ENCODE measurements at regions of chr10 and their contacts with region 1.

Region 1: DNA sequence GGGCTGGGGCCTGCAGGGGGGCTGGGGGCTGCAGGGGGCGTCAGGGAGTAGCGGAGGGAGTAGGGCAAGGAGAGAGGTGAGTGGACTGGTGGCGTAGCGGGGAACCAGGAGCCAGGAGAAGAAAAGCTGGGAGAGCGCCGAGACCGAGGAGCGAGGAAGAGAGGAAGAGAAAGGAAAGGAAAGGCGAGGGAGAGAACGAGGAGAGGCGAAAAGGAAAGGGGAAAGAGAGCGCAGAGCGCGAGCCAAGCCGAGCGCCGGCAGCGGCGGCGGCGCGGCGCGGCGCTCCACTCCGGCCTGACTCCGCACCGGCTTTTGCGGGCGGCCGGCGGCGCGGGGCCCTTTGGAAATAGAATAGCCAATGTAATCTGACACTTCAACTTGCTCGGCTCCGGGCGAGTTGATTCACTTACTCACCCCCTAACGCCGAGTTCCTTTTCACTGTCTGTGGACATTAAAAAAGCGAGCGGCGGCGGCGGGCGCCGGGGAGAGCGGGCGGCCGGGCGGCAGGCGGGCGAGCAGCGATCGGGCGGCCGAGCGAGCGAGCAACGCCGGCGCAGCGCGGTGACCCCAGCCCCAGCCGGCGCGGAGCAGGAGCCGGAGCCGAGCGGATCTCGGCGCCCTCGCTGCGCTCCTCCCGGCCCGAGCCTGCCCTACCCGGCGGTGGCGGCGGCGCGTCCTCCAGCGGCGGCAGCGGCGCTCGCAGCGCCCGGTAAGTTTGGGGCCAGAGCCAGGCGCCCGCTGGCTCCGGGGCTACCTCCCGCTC is at the start of gene ZMIZ1:
- DNase-seq: peak; percentile 63 to 90 (median 76)
- ATAC-seq: peak; percentile 62
- H3K4me3 ChIP-seq: peak within 1 kb of the TSS; percentile 97
- H3K4me3 Mint-ChIP-seq: peak within 1 kb of the TSS; percentile 97
- H3K27ac ChIP-seq: peak within 1 kb of the TSS; percentile 44 to 46
- H3K27ac Mint-ChIP-seq: peak within 1 kb of the TSS; percentile 86
- H3K4me1 ChIP-seq: peaks cover 64% of the 10 kb centered on the region
- H3K4me1 Mint-ChIP-seq: peaks cover 56% of the 10 kb centered on the region
- H3K27me3 ChIP-seq: no peaks in the 10 kb centered on the region
- H3K27me3 Mint-ChIP-seq: no peaks in the 10 kb centered on the region
- CTCF ChIP-seq: no peak
- total RNA-seq, gene ZMIZ1: 14.6 to 15.5 TPM

Region 2: DNA sequence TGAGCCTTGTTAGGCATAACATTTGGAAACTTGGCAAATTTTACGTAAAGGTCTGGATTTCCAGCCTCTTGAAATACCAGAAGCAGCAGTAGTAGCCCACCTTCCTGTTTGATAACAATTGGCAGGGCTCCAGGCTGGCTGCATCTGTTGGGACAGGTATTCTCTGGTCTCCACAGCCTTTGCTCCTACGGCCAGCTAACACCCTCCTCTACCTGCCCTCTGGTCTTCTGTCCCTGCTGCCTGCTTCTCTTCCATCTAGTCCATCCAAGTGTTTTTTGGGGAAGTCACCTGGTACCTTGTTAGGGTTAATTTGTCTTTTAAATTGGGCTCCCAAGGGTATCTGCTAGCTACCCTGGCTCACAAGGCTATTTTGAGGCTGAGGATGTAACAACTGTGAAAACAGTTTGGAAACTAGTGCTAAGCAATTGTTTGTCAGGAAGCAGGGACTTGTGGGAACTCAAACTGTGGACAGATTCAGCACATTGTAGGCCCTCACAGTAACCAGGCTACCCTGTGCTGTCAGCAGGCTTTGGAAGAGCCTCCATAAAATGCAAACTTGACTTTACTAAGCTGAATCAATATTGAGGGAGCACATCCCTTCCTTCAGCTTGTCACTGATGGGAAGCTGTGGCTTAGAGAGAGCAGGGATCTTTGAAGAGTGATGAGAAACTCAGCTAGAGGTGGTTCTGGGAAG is 1026.5 kb before region 1 on chr10:
- CTCF ChIA-PET with region 1: interaction called, 3 read pairs
- POLR2A ChIA-PET with region 1: no interaction called
- intact Hi-C with region 1: loop called in 1 of 2 experiments (anchors 5 kb)
- DNase-seq: no peak
- ATAC-seq: no peak
- H3K4me3 ChIP-seq: no peak overlapping the region
- H3K4me3 Mint-ChIP-seq: no peak overlapping the region
- H3K27ac ChIP-seq: no peak overlapping the region
- H3K27ac Mint-ChIP-seq: peak overlapping the region; percentile 76
- H3K4me1 ChIP-seq: peaks cover 34% of the 10 kb centered on the region
- H3K4me1 Mint-ChIP-seq: peaks cover 52% of the 10 kb centered on the region
- H3K27me3 ChIP-seq: no peaks in the 10 kb centered on the region
- H3K27me3 Mint-ChIP-seq: no peaks in the 10 kb centered on the region
- CTCF ChIP-seq: no peak

Region 3: DNA sequence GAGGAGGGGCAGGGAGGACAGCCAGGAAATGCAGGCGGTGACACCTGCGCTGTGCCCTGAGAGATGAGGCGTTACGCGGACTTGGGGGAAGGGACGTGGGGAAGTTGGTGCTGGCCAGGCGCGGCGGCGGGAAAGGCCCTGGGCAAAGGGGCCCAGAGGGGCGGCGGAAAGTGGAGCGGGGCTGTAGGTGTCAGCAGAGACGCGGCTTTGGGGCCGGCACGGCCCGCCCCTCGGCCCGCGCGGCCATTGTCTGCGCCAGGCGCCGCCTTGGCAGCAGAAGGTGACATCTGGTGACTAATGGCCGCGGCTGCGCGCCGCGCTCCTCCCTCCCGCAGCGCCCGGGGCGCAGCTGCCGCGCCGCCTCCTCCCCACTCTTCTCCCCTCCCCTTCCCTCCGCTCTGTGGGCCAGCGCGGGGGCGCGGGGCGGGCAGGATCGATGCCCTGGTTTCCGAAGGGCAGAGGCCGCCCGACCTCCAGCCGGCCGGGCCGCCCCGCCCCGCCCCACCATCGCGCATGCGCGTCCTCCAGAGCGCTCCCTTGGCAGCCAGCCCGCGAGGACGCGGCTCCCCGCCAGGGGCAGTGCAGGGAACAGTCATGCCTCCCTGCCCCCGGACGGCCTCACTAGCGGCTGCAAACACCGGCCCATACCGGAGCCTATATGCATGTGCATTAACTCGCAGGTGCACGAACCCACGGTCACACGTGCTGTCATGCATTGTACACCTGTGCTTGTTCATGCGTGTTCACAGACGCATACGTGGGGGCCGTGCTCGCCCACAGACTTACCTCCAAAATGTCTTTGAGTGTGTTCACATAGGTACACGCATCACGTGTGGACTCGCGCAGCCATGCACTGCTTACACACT is 765.5 kb before region 1 on chr10:
- CTCF ChIA-PET with region 1: no interaction called
- POLR2A ChIA-PET with region 1: no interaction called
- intact Hi-C with region 1: loop called in 1 of 2 experiments (anchors 2 kb)
- DNase-seq: peak; percentile 89 to 98 (median 96)
- ATAC-seq: peak; percentile 86
- H3K4me3 ChIP-seq: peak overlapping the region; percentile 84
- H3K4me3 Mint-ChIP-seq: peak overlapping the region; percentile 93
- H3K27ac ChIP-seq: peak overlapping the region; percentile 83 to 91
- H3K27ac Mint-ChIP-seq: peak overlapping the region; percentile 90
- H3K4me1 ChIP-seq: peaks cover 26% of the 10 kb centered on the region
- H3K4me1 Mint-ChIP-seq: peaks cover 18% of the 10 kb centered on the region
- H3K27me3 ChIP-seq: no peaks in the 10 kb centered on the region
- H3K27me3 Mint-ChIP-seq: no peaks in the 10 kb centered on the region
- CTCF ChIP-seq: peak; percentile 82

Region 4: GRCh38 chr10:78972947-78973900 is 95.5 kb before region 1 on chr10:
- CTCF ChIA-PET with region 1: no interaction called
- POLR2A ChIA-PET with region 1: interaction called, 8 read pairs
- intact Hi-C with region 1: loop called (anchors 1 to 5 kb)
- DNase-seq: peak; percentile 14 to 86 (median 52)
- ATAC-seq: peak; percentile 69
- H3K4me3 ChIP-seq: peak overlapping the region; percentile 56
- H3K4me3 Mint-ChIP-seq: peak overlapping the region; percentile 91
- H3K27ac ChIP-seq: no peak overlapping the region
- H3K27ac Mint-ChIP-seq: peak overlapping the region; percentile 69
- H3K4me1 ChIP-seq: peaks cover 19% of the 10 kb centered on the region
- H3K4me1 Mint-ChIP-seq: peaks cover 15% of the 10 kb centered on the region
- H3K27me3 ChIP-seq: no peaks in the 10 kb centered on the region
- H3K27me3 Mint-ChIP-seq: no peaks in the 10 kb centered on the region
- CTCF ChIP-seq: no peak

Region 5: DNA sequence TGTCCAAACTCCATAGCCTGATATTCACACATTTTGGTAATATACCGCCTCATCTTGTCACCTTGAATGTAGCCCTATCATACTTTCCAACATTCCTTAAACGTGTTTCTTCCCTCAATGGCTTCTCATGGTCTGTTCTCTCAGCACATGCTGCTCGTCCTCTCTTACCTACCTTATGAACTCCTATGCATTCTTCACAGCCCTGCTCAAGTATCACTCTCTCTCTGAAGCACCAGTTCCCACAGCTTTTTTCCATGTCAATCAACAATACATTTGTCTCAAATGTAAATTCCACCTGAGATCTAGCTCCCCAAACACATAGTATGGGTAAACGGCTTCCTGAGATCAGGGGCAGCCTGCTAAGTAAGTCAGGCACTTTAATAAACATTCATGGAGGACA is 85.1 kb before region 1 on chr10:
- CTCF ChIA-PET with region 1: no interaction called
- POLR2A ChIA-PET with region 1: no interaction called
- intact Hi-C with region 1: no loop called
- DNase-seq: no peak
- ATAC-seq: no peak
- H3K4me3 ChIP-seq: no peak overlapping the region
- H3K4me3 Mint-ChIP-seq: no peak overlapping the region
- H3K27ac ChIP-seq: no peak overlapping the region
- H3K27ac Mint-ChIP-seq: no peak overlapping the region
- H3K4me1 ChIP-seq: peaks cover 8% of the 10 kb centered on the region
- H3K4me1 Mint-ChIP-seq: peaks cover 13% of the 10 kb centered on the region
- H3K27me3 ChIP-seq: no peaks in the 10 kb centered on the region
- H3K27me3 Mint-ChIP-seq: no peaks in the 10 kb centered on the region
- CTCF ChIP-seq: no peak

Region 6: GRCh38 chr10:79149662-79150443 is 81.1 kb after region 1 on chr10:
- CTCF ChIA-PET with region 1: no interaction called
- POLR2A ChIA-PET with region 1: interaction called, 3 read pairs
- intact Hi-C with region 1: loop called in 1 of 2 experiments (anchors 5 kb)
- DNase-seq: peak in 11 of 14 experiments; percentile 11 to 64 (median 46)
- ATAC-seq: peak; percentile 69
- H3K4me3 ChIP-seq: no peak overlapping the region
- H3K4me3 Mint-ChIP-seq: no peak overlapping the region
- H3K27ac ChIP-seq: peak overlapping the region; percentile 5 to 22
- H3K27ac Mint-ChIP-seq: peak overlapping the region; percentile 75
- H3K4me1 ChIP-seq: peaks cover 70% of the 10 kb centered on the region
- H3K4me1 Mint-ChIP-seq: peaks cover 57% of the 10 kb centered on the region
- H3K27me3 ChIP-seq: no peaks in the 10 kb centered on the region
- H3K27me3 Mint-ChIP-seq: no peaks in the 10 kb centered on the region
- CTCF ChIP-seq: no peak

Region 7: GRCh38 chr10:79445141-79445976 is 376.6 kb after region 1 on chr10 and contains the start of gene ZCCHC24:
- CTCF ChIA-PET with region 1: no interaction called
- POLR2A ChIA-PET with region 1: no interaction called
- intact Hi-C with region 1: loop called in 1 of 2 experiments (anchors 10 kb)
- DNase-seq: peak; percentile 87 to 98 (median 93)
- ATAC-seq: peak; percentile 91
- H3K4me3 ChIP-seq: peak within 1 kb of the TSS; percentile 58
- H3K4me3 Mint-ChIP-seq: peak within 1 kb of the TSS; percentile 94
- H3K27ac ChIP-seq: no peak within 1 kb of the TSS
- H3K27ac Mint-ChIP-seq: peak within 1 kb of the TSS; percentile 83
- H3K4me1 ChIP-seq: peaks cover 33% of the 10 kb centered on the region
- H3K4me1 Mint-ChIP-seq: peaks cover 32% of the 10 kb centered on the region
- H3K27me3 ChIP-seq: no peaks in the 10 kb centered on the region
- H3K27me3 Mint-ChIP-seq: no peaks in the 10 kb centered on the region
- CTCF ChIP-seq: no peak
- total RNA-seq, gene ZCCHC24: 0.67 to 0.85 TPM

Measured in CD4-positive, alpha-beta T cell (primary cell).